Calu3 (cell line): ENCODE measurements at regions of chr22 and their contacts with region 1.

Region 1: DNA sequence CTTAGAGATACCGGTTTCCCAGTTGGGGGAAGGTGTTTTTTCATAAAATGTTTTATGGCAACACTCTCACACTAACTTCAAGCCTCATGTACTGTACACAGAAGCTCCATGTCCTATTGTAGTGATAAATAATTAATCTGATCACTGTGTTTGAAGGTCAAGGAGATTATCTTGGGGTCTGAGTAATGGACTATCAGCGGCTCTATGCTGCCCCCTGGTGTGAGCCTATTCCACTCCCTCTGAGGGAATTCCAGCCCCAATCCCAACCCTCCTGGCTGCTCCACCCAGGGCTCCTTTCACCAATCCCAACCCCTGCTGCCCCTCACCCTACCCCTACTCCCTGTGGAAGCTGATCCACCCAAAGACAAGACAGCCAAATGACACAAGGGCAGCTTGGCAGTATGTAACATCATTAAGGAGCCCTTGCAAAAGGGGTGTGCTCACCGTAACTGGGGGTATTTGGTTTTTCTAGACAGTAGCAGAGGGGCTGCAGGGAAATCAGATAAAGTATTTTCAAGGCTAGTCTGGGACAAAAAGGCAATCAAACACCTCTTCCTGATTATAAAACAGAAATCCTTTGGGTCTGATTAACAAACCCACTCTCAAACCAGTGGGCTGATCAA is 22.3 kb downstream of the HPS4 start:
- DNase-seq: peak; percentile 71
- H3K4me3 Mint-ChIP-seq: no peak overlapping the region
- H3K27ac Mint-ChIP-seq: no peak overlapping the region
- H3K4me1 Mint-ChIP-seq: no peaks in the 10 kb centered on the region
- H3K27me3 Mint-ChIP-seq: no peaks in the 10 kb centered on the region
- CTCF ChIP-seq: peak; percentile 79

Region 2: GRCh38 chr22:26364066-26365015 is 97.0 kb before region 1 on chr22:
- CTCF ChIA-PET with region 1: interaction called, 9 read pairs
- intact Hi-C with region 1: loop called (anchors 10 kb)
- DNase-seq: peak; percentile 70
- H3K4me3 Mint-ChIP-seq: no peak overlapping the region
- H3K27ac Mint-ChIP-seq: no peak overlapping the region
- H3K4me1 Mint-ChIP-seq: peaks cover 6% of the 10 kb centered on the region
- H3K27me3 Mint-ChIP-seq: peaks cover 49% of the 10 kb centered on the region
- CTCF ChIP-seq: peak; percentile 52

Region 3: DNA sequence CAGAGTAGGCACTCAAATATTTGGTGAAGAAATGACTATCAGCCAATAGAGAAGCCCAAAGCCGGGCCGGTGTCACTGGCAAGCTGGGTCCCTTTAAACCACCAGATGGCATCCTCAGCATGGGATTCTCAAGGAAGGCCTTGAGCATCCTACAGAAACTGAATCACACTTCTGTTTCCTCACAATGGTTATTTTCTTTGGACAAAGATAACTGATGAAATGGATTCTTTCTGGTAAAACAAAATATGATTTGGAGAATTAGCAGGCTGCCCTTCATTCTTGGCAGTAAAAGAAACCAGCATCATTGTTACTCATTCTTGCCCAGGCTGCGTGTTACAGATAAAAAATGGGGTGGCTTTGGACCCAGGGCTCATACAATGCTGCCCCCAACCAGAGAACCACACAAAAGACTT is 62.6 kb before region 1 on chr22:
- CTCF ChIA-PET with region 1: interaction called, 3 read pairs
- intact Hi-C with region 1: loop called (anchors 1 kb)
- DNase-seq: peak; percentile 68
- H3K4me3 Mint-ChIP-seq: no peak overlapping the region
- H3K27ac Mint-ChIP-seq: no peak overlapping the region
- H3K4me1 Mint-ChIP-seq: no peaks in the 10 kb centered on the region
- H3K27me3 Mint-ChIP-seq: peaks cover 82% of the 10 kb centered on the region
- CTCF ChIP-seq: peak; percentile 54

Region 4: GRCh38 chr22:26428515-26429457 is 32.5 kb before region 1 on chr22 and contains the start of gene ASPHD2:
- CTCF ChIA-PET with region 1: no interaction called
- intact Hi-C with region 1: no loop called
- DNase-seq: peak; percentile 59
- H3K4me3 Mint-ChIP-seq: peak within 1 kb of the TSS; percentile 84
- H3K27ac Mint-ChIP-seq: peak within 1 kb of the TSS; percentile 37
- H3K4me1 Mint-ChIP-seq: no peaks in the 10 kb centered on the region
- H3K27me3 Mint-ChIP-seq: peaks cover 89% of the 10 kb centered on the region
- CTCF ChIP-seq: no peak
- total RNA-seq, gene ASPHD2: 0.40 and 0.71 TPM in 2 replicates

Region 5: GRCh38 chr22:26471522-26471921 is 10.2 kb after region 1 on chr22:
- CTCF ChIA-PET with region 1: interaction called, 11 read pairs
- intact Hi-C with region 1: no loop called
- DNase-seq: peak; percentile 85
- H3K4me3 Mint-ChIP-seq: peak overlapping the region; percentile 39
- H3K27ac Mint-ChIP-seq: peak overlapping the region; percentile 71
- H3K4me1 Mint-ChIP-seq: peaks cover 46% of the 10 kb centered on the region
- H3K27me3 Mint-ChIP-seq: no peaks in the 10 kb centered on the region
- CTCF ChIP-seq: no peak

Region 6: DNA sequence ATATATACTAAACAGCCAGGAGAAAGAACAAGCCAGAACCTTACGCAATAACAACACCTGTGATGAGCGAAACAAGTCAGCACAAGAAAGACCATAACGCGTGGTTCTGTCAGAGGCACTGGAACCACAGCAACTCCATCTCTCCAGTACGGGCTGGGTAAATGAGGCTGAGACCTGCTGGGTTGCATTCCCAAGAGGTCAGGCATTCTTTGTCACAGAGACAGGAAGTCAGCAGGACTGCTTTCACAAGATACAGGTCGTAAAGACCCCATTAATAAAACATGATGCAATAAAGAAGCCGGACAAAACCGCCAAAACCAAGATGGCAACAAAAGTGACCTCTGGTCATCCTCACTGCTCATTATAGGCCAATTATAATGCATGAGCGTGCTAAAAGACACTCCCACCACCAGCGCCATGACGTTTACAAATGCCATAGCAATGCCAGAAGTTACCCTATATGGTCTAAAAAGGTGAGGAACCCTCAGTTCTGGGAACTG is 107.0 kb after region 1 on chr22:
- CTCF ChIA-PET with region 1: no interaction called
- intact Hi-C with region 1: no loop called
- DNase-seq: no peak
- H3K4me3 Mint-ChIP-seq: no peak overlapping the region
- H3K27ac Mint-ChIP-seq: no peak overlapping the region
- H3K4me1 Mint-ChIP-seq: no peaks in the 10 kb centered on the region
- H3K27me3 Mint-ChIP-seq: no peaks in the 10 kb centered on the region
- CTCF ChIP-seq: no peak